ENCODE measurements at regions of chr6 and their contacts with region 1.

Region 1: GRCh38 chr6:134491477-134491876 is 173.6 kb upstream of the SGK1 start:
- DNase-seq: no peak
- H3K27ac ChIP-seq: no peak overlapping the region
- CTCF ChIP-seq: no peak

Region 2: GRCh38 chr6:134345772-134346171 is 145.7 kb before region 1 on chr6:
- CTCF ChIA-PET with region 1: no interaction called
- POLR2A ChIA-PET with region 1: no interaction called
- DNase-seq: no peak
- H3K27ac ChIP-seq: no peak overlapping the region
- CTCF ChIP-seq: no peak

Region 3: GRCh38 chr6:134436281-134436815 is 55.1 kb before region 1 on chr6:
- CTCF ChIA-PET with region 1: interaction called, 3 read pairs
- POLR2A ChIA-PET with region 1: interaction called, 12 read pairs
- DNase-seq: peak; percentile 92
- H3K27ac ChIP-seq: peak overlapping the region; percentile 75
- CTCF ChIP-seq: no peak

Region 4: DNA sequence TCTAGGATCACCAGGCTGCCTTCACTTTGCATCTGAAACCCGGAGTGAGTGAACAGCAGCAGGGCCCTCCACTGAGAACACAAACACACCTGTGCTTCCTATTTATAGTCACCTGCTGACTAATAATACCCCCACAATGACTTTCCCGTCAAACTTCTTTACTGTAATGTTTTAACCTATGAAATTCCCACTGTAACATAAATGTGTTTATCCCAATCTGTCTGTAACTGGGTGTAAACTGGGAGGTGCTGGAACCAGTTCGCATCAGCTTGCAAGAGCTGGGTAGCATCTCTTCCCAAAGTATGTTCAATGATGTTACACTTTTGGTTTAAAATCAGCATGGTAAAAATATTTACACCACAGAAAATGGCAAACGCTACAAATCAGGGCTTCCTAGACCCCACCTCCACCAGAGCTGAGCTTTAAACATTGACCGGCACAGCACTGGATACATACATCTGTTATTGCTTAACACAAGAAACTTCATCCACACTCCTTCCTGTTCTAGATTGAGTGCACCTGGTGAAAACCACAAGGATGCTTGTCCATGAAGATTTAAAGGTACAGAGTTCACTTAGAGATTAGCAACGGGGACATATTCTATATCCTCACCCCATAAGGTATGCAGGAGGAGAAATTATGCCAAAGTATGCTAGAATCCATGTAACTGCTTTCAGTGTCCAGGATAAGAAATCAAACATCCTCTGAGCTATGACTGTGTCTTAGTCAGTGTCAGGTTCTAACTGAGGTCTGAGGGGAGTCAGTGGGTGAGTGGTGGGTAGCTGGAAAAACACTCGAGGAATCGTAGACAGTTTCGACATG is 379.4 kb after region 1 on chr6:
- CTCF ChIA-PET with region 1: no interaction called
- POLR2A ChIA-PET with region 1: no interaction called
- DNase-seq: no peak
- H3K27ac ChIP-seq: peak overlapping the region; percentile 63
- CTCF ChIP-seq: no peak